Posterior vena cava (tissue), 2 donors: ENCODE measurements at regions of chr12 and their contacts with region 1.

Region 1: GRCh38 chr12:125185740-125186470 is 120.7 kb downstream of the AACS start:
- DNase-seq: no peak

Region 2: DNA sequence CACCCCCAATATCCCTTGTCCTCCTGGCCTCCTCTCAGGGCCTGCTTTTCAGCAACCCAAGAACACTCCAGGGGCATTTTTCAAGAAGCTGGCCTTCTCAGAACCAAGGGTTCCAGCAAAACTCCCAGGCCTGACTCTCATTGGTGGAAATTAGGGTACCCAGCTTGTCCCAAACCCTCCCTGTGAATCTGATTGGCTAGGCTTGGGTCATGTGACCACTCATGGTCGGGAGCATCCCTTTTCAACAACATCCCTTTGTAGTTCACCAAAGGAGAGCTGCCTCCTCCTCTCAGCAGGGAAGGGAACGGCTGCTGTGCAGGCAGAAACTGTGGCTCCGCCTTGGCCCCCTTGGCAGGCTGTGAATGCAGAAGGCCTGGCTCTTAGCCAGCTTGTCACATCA is 26.2 kb before region 1 on chr12:
- intact Hi-C with region 1: no loop called
- DNase-seq: no peak

Region 3: GRCh38 chr12:125214289-125214688 is 28.4 kb after region 1 on chr12:
- intact Hi-C with region 1: loop called in 1 of 2 experiments (anchors 1 kb)
- DNase-seq: no peak

Region 4: GRCh38 chr12:125225641-125226040 is 39.7 kb after region 1 on chr12:
- intact Hi-C with region 1: no loop called
- DNase-seq: no peak

Region 5: GRCh38 chr12:125245581-125246557 is 60.0 kb after region 1 on chr12:
- intact Hi-C with region 1: no loop called
- DNase-seq: peak; percentile 59